ENCODE measurements at regions of chr6 and their contacts with region 1.

Region 1: DNA sequence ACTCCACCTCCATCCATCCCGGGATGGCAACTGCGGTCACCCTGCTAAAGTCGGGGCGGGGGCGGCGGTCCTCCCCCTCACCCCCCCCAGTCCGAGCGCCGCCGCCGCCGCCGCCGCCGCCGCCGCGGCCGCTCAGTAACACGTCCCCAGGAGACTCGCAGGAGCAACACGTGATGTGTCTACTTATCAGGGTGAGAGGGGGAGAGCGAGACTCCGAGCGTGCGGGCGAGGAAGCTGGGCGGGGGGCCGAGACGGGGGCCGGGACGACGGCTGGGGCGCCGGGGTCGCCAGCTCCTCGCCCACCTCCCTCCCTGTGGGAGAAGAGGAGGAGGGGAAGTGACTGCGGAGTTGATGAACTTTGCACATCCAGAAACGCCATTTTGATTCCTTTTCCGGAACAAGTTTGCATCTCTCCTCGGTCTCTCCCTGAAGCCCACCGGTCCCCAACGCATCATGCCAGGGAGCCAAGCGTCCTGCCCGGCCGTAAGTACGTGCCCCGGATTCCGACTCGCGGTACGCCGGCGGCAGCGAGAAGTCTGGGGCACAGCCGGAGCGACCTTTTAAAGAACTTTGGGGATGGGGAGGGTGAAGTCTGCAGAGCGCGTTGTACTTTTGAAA is at the start of gene RREB1:
- DNase-seq: peak; percentile 26 to 79 (median 48)
- ATAC-seq: peak; percentile 50
- H3K4me3 ChIP-seq: peak within 1 kb of the TSS; percentile 93
- H3K4me3 Mint-ChIP-seq: peak within 1 kb of the TSS; percentile 100
- H3K27ac ChIP-seq: peak within 1 kb of the TSS; percentile 63 to 74
- H3K27ac Mint-ChIP-seq: peak within 1 kb of the TSS; percentile 93
- H3K4me1 ChIP-seq: peaks cover 21% of the 10 kb centered on the region
- H3K4me1 Mint-ChIP-seq: peaks cover 43% of the 10 kb centered on the region
- H3K27me3 ChIP-seq: no peaks in the 10 kb centered on the region
- H3K27me3 Mint-ChIP-seq: no peaks in the 10 kb centered on the region
- CTCF ChIP-seq: no peak
- total RNA-seq, gene RREB1: 56.5 to 60.0 TPM

Region 2: DNA sequence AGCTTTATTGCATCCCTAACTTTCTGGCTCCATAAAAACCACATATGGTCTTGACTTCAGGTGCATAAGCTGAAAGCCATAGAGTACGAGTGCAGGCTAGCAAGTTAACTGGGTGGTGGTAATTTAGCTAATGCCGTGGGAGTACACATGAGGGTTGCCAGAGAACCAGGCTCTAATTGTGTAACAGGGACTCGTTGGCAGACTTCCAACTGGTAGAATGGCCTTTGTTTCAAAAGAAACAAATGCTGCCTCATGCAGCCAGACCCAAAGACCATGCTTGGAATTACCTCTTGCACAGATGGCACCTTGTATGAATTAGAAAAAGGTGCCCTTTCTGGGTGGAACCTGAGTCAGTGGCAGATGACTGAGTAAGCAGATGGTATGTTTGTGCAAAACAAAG is 446.0 kb before region 1 on chr6:
- CTCF ChIA-PET with region 1: no interaction called
- POLR2A ChIA-PET with region 1: interaction called, 3 read pairs
- intact Hi-C with region 1: loop called in 1 of 2 experiments (anchors 10 kb)
- DNase-seq: peak in 2 of 14 experiments; percentile 16 to 35
- ATAC-seq: no peak
- H3K4me3 ChIP-seq: no peak overlapping the region
- H3K4me3 Mint-ChIP-seq: no peak overlapping the region
- H3K27ac ChIP-seq: no peak overlapping the region
- H3K27ac Mint-ChIP-seq: peak overlapping the region; percentile 89
- H3K4me1 ChIP-seq: peaks cover 8% of the 10 kb centered on the region
- H3K4me1 Mint-ChIP-seq: peaks cover 64% of the 10 kb centered on the region
- H3K27me3 ChIP-seq: no peaks in the 10 kb centered on the region
- H3K27me3 Mint-ChIP-seq: no peaks in the 10 kb centered on the region
- CTCF ChIP-seq: no peak

Region 3: DNA sequence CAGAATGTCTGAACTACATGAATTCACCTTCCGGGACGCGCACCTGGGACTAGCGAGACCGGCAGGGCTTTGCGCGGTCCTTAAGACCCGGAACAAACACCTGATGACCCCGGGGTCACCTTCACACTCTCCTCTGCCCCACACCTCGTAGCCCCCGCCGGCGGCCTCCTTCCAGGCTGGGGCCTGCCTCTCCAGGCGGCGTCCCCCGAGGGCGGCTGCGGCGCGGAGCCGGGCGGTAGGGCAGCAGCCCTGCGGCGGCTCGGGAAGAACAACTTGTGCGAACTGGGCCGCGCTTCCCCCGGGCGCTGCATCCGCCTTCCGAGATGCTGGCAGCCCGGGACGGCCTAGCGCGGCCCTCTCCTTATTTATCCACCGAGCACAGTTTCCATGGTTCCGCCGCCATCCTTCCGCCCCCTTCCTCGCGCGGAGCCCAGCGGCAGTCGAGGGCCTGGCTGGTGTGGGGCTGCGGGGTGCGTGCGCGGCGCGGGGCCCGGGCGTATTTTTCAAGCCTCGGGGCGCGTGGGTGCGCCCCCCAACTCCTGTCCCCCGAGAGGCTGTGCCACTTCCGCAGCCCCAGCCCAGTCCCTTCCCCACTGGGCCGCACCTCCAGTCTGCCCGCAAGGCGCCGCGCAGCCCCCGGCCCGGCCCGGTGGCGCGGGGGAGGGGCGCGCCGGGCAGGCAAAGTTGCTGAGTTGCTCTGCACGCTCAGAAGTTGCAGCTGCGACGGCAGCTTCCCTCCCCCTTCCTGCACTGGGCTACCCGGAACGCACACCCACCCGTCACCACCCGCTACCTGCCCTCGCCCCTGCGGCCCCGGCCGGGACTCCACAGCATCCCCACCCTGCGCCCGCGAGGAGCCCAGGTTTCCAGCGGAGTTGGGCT is 56.2 kb before region 1 on chr6:
- CTCF ChIA-PET with region 1: no interaction called
- POLR2A ChIA-PET with region 1: interaction called, 22 read pairs
- intact Hi-C with region 1: loop called (anchors 2 kb)
- DNase-seq: peak; percentile 29 to 79 (median 53)
- ATAC-seq: peak; percentile 73
- H3K4me3 ChIP-seq: peak overlapping the region; percentile 74
- H3K4me3 Mint-ChIP-seq: peak overlapping the region; percentile 82
- H3K27ac ChIP-seq: peak overlapping the region in 1 of 2 donors; percentile 59
- H3K27ac Mint-ChIP-seq: peak overlapping the region; percentile 42
- H3K4me1 ChIP-seq: peaks cover 19% of the 10 kb centered on the region
- H3K4me1 Mint-ChIP-seq: peaks cover 13% of the 10 kb centered on the region
- H3K27me3 ChIP-seq: no peaks in the 10 kb centered on the region
- H3K27me3 Mint-ChIP-seq: no peaks in the 10 kb centered on the region
- CTCF ChIP-seq: no peak

Region 4: GRCh38 chr6:7086488-7086887 is 21.2 kb before region 1 on chr6:
- CTCF ChIA-PET with region 1: interaction called, 3 read pairs
- POLR2A ChIA-PET with region 1: interaction called, 60 read pairs
- intact Hi-C with region 1: loop called (anchors 2 kb)
- DNase-seq: peak in 9 of 14 experiments; percentile 10 to 76 (median 43)
- ATAC-seq: peak; percentile 66
- H3K4me3 ChIP-seq: peak overlapping the region; percentile 52
- H3K4me3 Mint-ChIP-seq: peak overlapping the region; percentile 78
- H3K27ac ChIP-seq: peak overlapping the region; percentile 9 to 26
- H3K27ac Mint-ChIP-seq: peak overlapping the region; percentile 70
- H3K4me1 ChIP-seq: peaks cover 20% of the 10 kb centered on the region
- H3K4me1 Mint-ChIP-seq: peaks cover 36% of the 10 kb centered on the region
- H3K27me3 ChIP-seq: no peaks in the 10 kb centered on the region
- H3K27me3 Mint-ChIP-seq: no peaks in the 10 kb centered on the region
- CTCF ChIP-seq: no peak

Region 5: GRCh38 chr6:7196019-7196402 is 88.3 kb after region 1 on chr6:
- CTCF ChIA-PET with region 1: no interaction called
- POLR2A ChIA-PET with region 1: no interaction called
- intact Hi-C with region 1: loop called in 1 of 2 experiments (anchors 5 kb)
- DNase-seq: peak in 7 of 14 experiments; percentile 9 to 47 (median 31)
- ATAC-seq: peak; percentile 92
- H3K4me3 ChIP-seq: no peak overlapping the region
- H3K4me3 Mint-ChIP-seq: peak overlapping the region; percentile 84
- H3K27ac ChIP-seq: no peak overlapping the region
- H3K27ac Mint-ChIP-seq: peak overlapping the region; percentile 91
- H3K4me1 ChIP-seq: peaks cover 8% of the 10 kb centered on the region
- H3K4me1 Mint-ChIP-seq: peaks cover 50% of the 10 kb centered on the region
- H3K27me3 ChIP-seq: no peaks in the 10 kb centered on the region
- H3K27me3 Mint-ChIP-seq: no peaks in the 10 kb centered on the region
- CTCF ChIP-seq: no peak

Region 6: DNA sequence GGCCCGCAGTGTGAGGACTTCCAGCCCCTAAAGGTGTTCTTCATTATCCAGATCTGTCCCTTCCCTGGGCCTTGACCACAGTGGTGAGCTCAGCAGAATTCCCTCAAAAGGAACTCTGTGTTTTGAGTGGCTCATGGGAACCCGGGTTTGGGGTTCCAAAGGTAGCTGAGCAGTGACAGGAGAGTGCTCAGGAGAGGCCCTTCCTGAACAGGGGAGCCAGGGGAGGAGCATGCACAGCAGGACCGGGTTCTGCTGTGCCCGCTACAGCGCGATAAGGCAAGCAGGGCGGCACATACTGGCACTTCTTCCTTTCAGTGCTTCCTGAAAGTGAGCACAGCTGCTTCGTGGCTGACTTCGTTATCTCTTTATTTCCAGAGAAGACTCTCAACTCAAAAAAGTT is 117.0 kb after region 1 on chr6:
- CTCF ChIA-PET with region 1: no interaction called
- POLR2A ChIA-PET with region 1: no interaction called
- intact Hi-C with region 1: no loop called
- DNase-seq: no peak
- ATAC-seq: no peak
- H3K4me3 ChIP-seq: no peak overlapping the region
- H3K4me3 Mint-ChIP-seq: no peak overlapping the region
- H3K27ac ChIP-seq: no peak overlapping the region
- H3K27ac Mint-ChIP-seq: peak overlapping the region; percentile 74
- H3K4me1 ChIP-seq: no peaks in the 10 kb centered on the region
- H3K4me1 Mint-ChIP-seq: peaks cover 7% of the 10 kb centered on the region
- H3K27me3 ChIP-seq: no peaks in the 10 kb centered on the region
- H3K27me3 Mint-ChIP-seq: no peaks in the 10 kb centered on the region
- CTCF ChIP-seq: no peak